GM23248 (cell line): ENCODE measurements at regions of chr9 and their contacts with region 1.

Region 1: DNA sequence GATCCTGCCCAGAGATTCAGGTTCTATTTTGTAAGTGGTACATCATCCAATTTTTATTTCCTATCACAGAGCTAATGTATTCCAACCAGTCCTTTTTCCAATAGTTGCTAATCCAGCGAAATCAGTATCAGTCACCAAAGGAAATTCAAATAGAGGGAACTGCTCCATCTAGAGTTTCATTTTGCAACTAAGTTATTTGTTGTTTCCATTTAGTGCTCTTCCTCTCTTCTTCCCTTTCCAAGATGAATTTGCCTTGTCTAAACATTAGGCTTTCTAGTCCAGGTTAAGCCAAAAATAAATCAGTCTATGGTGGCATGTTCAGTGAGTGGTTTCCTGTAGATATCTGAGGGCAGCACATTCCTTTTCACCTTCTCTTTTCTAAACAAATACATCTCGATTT is 79.8 kb upstream of the SPATA31D4 start:
- DNase-seq: peak; percentile 54
- H3K4me3 ChIP-seq: no peak overlapping the region
- H3K27ac ChIP-seq: no peak overlapping the region
- H3K4me1 ChIP-seq: peaks cover 6% of the 10 kb centered on the region; the same call in 1 of the 2 replicates
- H3K27me3 ChIP-seq: no peaks in the 10 kb centered on the region

Region 2: DNA sequence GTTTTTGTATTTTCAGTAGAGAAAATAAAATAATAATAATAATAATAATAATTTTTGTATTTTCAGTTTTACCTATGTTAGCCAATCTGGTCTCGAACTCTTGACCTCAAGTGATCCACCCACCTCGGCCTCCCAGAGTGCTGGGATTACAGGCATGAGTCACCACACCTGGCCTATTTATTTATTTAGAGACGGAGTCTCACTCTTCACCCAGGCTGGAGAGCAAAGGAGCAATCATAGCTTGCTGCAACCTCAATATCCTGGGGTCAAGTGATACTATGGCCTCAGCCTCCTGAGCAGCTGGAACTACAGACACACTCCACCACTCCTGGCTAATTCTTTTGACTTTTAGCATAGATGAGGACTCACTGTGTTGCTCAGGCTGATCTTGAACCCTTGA is 326.6 kb before region 1 on chr9:
- in situ Hi-C with region 1: loop called (anchors 25 kb)
- DNase-seq: no peak
- H3K4me3 ChIP-seq: no peak overlapping the region
- H3K27ac ChIP-seq: no peak overlapping the region
- H3K4me1 ChIP-seq: no peaks in the 10 kb centered on the region
- H3K27me3 ChIP-seq: peaks cover 2% of the 10 kb centered on the region; the same call in 1 of the 2 replicates

Region 3: GRCh38 chr9:81619348-81620001 is 229.0 kb before region 1 on chr9:
- in situ Hi-C with region 1: no loop called
- DNase-seq: peak; percentile 63
- H3K4me3 ChIP-seq: no peak overlapping the region
- H3K27ac ChIP-seq: no peak overlapping the region
- H3K4me1 ChIP-seq: 0 out of 2 replicates have a peak, but pooled peaks cover 4% of the 10 kb centered on the region
- H3K27me3 ChIP-seq: no peaks in the 10 kb centered on the region

Region 4: DNA sequence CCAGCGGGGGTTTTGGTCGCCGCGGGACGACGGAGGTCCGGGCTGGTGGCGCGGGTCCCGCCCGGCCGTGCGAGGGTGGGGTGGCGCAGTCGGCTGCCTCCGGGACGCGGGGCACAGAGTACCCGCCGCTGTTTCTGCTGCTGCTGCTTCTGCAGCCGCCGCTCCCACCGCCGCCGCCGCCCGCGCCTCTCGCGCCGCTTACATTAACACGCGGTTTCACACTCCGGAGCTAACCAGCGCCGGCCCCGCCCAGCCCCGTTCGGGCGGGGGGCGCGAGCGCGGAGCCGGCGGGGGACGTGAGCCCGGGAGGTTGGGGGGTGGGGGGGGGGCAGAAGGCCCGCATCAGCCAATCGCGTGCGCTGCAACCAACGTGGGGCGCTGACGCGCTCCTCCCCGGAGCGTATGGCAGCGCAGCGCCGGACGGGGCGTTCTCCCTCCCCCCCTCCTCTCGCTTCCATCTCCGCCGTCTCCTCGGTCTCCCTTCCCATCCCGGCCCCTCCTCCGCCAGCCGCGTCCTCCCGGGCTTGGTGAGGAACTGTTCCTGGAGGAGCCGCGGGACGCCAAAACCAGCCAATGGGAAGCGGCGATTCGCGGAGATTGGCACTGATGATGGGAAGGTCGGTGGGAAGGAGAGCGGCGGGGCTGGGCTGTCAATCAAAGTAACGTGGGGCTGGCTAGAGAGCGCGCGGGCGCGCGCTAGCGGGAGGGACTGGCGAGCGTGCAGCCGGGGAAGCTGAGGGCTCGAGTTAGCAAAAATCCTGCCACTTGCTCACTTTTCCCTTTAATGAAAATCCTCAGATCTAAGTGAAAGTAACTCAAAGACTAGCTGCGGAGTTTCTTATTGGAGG is 158.9 kb before region 1 on chr9 and contains the start of gene TLE1:
- in situ Hi-C with region 1: loop called (anchors 10 kb)
- DNase-seq: peak; percentile 98
- H3K4me3 ChIP-seq: peak within 1 kb of the TSS; percentile 90
- H3K27ac ChIP-seq: peak within 1 kb of the TSS; percentile 46
- H3K4me1 ChIP-seq: peaks cover 23% of the 10 kb centered on the region
- H3K27me3 ChIP-seq: peaks cover 20% of the 10 kb centered on the region
- total RNA-seq, gene TLE1: 14.4 and 16.7 TPM in 2 replicates